Naive thymus-derived CD4-positive, alpha-beta T cell (primary cell): ENCODE measurements at regions of chr20 and their contacts with region 1.

Region 1: DNA sequence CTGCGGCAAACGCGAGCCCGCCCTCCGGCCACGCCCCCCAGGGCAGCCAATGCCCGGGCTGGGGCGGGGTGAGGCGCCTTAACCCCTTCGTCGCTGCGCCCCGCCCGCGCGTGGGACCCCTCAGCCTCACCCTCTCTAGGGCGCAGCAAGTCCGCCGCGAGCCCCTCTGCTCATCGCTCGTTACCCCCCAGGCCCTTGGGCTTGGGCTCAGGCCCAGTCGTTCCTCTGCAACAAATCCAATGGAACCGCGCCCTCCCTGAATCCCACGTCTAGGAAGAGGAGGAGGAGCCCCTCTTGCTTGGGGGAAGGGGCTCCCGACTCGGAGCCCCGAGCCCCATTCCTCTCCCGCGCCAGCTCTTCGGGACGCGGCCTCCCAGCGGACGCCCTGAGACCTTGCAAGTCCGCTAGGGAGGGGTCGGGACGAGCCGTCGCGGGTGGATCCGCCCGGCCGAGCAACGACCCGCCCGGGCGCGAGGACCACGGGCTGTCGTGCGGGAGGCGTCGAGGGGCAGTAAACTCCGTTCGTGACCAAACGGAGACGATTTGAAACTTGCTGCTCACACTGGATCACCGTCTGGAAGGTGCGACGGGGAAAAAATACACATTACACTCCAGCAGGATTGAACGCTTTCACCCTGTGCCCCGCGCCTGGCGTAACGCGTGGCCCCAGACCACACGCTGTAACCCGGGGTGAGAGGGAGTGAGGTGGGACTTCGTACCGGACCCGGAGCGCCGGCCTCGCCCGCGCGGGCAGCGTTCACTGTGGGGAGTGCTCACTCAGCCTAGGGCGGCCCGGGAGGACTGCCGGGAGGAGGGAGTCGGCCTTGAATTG is 477 bp upstream of the LZTS3 start:
- DNase-seq: peak in 7 of 9 donors; percentile 81 to 94 (median 92)
- ATAC-seq: peak; percentile 94
- H3K4me3 ChIP-seq: peak overlapping the region; percentile 87
- H3K4me3 Mint-ChIP-seq: peak overlapping the region; percentile 76 to 89 (median 86)
- H3K27ac ChIP-seq: peak overlapping the region; percentile 4
- H3K27ac Mint-ChIP-seq: peak overlapping the region; percentile 3 to 86 (median 51)
- H3K4me1 ChIP-seq: peaks cover 4 to 14% of the 10 kb centered on the region in 2 donors
- H3K4me1 Mint-ChIP-seq: peaks cover 15 to 34% (median 23%) of the 10 kb centered on the region in 7 donors
- H3K27me3 ChIP-seq: peaks cover 0 to 5% of the 10 kb centered on the region in 2 donors
- H3K27me3 Mint-ChIP-seq: peaks cover 0 to 63% (median 16%) of the 10 kb centered on the region in 5 donors

Region 2: GRCh38 chr20:2991532-2991931 is 182.3 kb before region 1 on chr20:
- CTCF ChIA-PET with region 1: no interaction called
- POLR2A ChIA-PET with region 1: no interaction called
- intact Hi-C with region 1: no loop called
- DNase-seq: no peak
- ATAC-seq: no peak
- H3K4me3 ChIP-seq: no peak overlapping the region
- H3K4me3 Mint-ChIP-seq: no peak overlapping the region
- H3K27ac ChIP-seq: no peak overlapping the region
- H3K27ac Mint-ChIP-seq: no peak overlapping the region
- H3K4me1 ChIP-seq: no peaks in the 10 kb centered on the region
- H3K4me1 Mint-ChIP-seq: peaks cover 0 to 36% (median 1%) of the 10 kb centered on the region in 7 donors
- H3K27me3 ChIP-seq: no peaks in the 10 kb centered on the region
- H3K27me3 Mint-ChIP-seq: no peaks in the 10 kb centered on the region

Region 3: GRCh38 chr20:3068986-3069900 is 104.6 kb before region 1 on chr20:
- CTCF ChIA-PET with region 1: interaction called, 3 read pairs
- POLR2A ChIA-PET with region 1: interaction called, 4 read pairs
- intact Hi-C with region 1: loop called (anchors 5 kb)
- DNase-seq: peak in 7 of 9 donors; percentile 52 to 73 (median 62)
- ATAC-seq: peak; percentile 61
- H3K4me3 ChIP-seq: no peak overlapping the region
- H3K4me3 Mint-ChIP-seq: peak overlapping the region in 1 of 10 donors; percentile 25
- H3K27ac ChIP-seq: no peak overlapping the region
- H3K27ac Mint-ChIP-seq: peak overlapping the region in 4 of 9 donors; percentile 32 to 77 (median 52)
- H3K4me1 ChIP-seq: peaks cover 0 to 17% of the 10 kb centered on the region in 2 donors
- H3K4me1 Mint-ChIP-seq: peaks cover 8 to 38% (median 27%) of the 10 kb centered on the region in 7 donors
- H3K27me3 ChIP-seq: no peaks in the 10 kb centered on the region
- H3K27me3 Mint-ChIP-seq: peaks cover 0 to 2% (median 0%) of the 10 kb centered on the region in 5 donors

Region 4: DNA sequence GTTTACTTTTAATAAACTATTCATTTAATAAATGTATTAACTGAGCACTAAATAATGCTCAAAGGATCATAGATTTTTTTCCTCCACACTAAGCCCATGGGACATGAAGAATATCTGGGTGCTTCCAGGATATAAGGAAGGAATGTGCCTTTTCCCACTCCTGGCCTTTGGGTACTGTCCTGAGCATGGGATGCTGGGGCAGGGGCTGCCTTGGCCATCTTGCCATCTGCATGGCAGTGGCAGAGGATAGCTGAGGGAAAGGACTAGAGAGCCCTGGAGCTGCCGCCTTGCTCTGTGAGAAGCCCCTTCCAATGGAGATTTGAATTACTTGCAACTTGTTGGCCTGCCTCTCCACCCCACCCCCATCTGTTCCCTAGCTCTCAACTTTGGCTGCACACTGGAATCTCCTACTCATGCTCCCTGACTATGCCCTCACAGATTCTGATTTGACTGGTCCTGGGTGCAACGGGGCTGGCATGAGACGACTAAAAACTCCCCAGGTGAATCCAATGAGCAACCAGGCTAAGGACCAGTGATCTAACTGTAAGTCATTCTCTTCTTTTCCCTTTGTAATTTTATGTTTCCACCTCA is 15.1 kb after region 1 on chr20:
- CTCF ChIA-PET with region 1: no interaction called
- POLR2A ChIA-PET with region 1: interaction called, 4 read pairs
- intact Hi-C with region 1: loop called in 1 of 2 experiments (anchors 1 kb)
- DNase-seq: no peak
- ATAC-seq: no peak
- H3K4me3 ChIP-seq: no peak overlapping the region
- H3K4me3 Mint-ChIP-seq: no peak overlapping the region
- H3K27ac ChIP-seq: no peak overlapping the region
- H3K27ac Mint-ChIP-seq: peak overlapping the region in 2 of 9 donors; percentile 42 to 82
- H3K4me1 ChIP-seq: no peaks in the 10 kb centered on the region
- H3K4me1 Mint-ChIP-seq: peaks cover 0 to 4% (median 0%) of the 10 kb centered on the region in 7 donors
- H3K27me3 ChIP-seq: no peaks in the 10 kb centered on the region
- H3K27me3 Mint-ChIP-seq: no peaks in the 10 kb centered on the region

Region 5: GRCh38 chr20:3204124-3204822 is 30.4 kb after region 1 on chr20 and contains the start of gene DDRGK1:
- CTCF ChIA-PET with region 1: interaction called, 7 read pairs
- POLR2A ChIA-PET with region 1: interaction called, 5 read pairs
- intact Hi-C with region 1: loop called (anchors 1 kb)
- DNase-seq: peak; percentile 79 to 95 (median 90)
- ATAC-seq: peak; percentile 96
- H3K4me3 ChIP-seq: peak within 1 kb of the TSS; percentile 99
- H3K4me3 Mint-ChIP-seq: peak within 1 kb of the TSS; percentile 91 to 97 (median 95)
- H3K27ac ChIP-seq: peak within 1 kb of the TSS; percentile 91
- H3K27ac Mint-ChIP-seq: peak within 1 kb of the TSS; percentile 91 to 98 (median 96)
- H3K4me1 ChIP-seq: peaks cover 12 to 18% of the 10 kb centered on the region in 2 donors
- H3K4me1 Mint-ChIP-seq: peaks cover 21 to 26% (median 22%) of the 10 kb centered on the region in 7 donors
- H3K27me3 ChIP-seq: no peaks in the 10 kb centered on the region
- H3K27me3 Mint-ChIP-seq: no peaks in the 10 kb centered on the region
- total RNA-seq, gene DDRGK1: 39.4 to 60.3 (median 46.6) TPM

Region 6: DNA sequence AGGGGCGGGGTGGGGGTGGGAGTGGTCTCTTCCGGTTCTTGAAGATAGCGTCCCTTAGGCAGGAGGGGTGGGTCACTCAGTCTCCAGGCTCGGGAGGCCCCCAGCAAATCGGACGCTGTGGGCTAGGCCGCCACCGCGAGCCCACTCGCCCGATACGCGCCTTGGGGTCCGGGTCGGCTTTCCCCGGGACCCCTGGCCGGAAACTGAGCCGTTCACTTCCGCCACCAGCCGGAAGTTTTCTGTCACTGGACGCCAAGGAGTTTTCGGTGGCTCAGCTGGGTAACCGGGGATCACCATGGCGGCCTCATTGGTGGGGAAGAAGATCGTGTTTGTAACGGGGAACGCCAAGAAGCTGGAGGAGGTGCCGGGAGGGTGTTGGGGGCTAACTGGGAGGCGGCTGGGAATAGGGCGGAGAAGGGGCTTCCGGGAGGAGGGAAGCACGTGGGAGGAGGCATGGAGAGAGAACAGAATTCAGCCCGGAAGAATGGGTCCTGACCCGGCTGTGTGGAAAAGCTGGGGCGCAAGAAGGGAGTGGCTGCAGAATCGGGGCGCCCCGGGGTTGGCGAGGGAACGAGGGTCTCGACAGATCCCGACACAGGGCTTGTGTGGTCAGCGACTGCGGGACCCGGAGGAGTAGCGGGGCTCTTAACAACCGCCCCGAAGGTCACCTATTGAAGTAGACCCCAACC is 35.6 kb after region 1 on chr20 and contains the start of gene ITPA:
- CTCF ChIA-PET with region 1: no interaction called
- POLR2A ChIA-PET with region 1: interaction called, 5 read pairs
- intact Hi-C with region 1: loop called (anchors 1 kb)
- DNase-seq: peak; percentile 26 to 67 (median 42)
- ATAC-seq: peak; percentile 44
- H3K4me3 ChIP-seq: peak within 1 kb of the TSS; percentile 94
- H3K4me3 Mint-ChIP-seq: peak within 1 kb of the TSS; percentile 85 to 100 (median 96)
- H3K27ac ChIP-seq: peak within 1 kb of the TSS; percentile 85
- H3K27ac Mint-ChIP-seq: peak within 1 kb of the TSS; percentile 85 to 99 (median 94)
- H3K4me1 ChIP-seq: peaks cover 8 to 14% of the 10 kb centered on the region in 2 donors
- H3K4me1 Mint-ChIP-seq: peaks cover 20 to 38% (median 31%) of the 10 kb centered on the region in 7 donors
- H3K27me3 ChIP-seq: no peaks in the 10 kb centered on the region
- H3K27me3 Mint-ChIP-seq: no peaks in the 10 kb centered on the region
- total RNA-seq, gene ITPA: 37.7 to 71.2 (median 43.5) TPM

Region 7: GRCh38 chr20:3251806-3252205 is 78.0 kb after region 1 on chr20:
- CTCF ChIA-PET with region 1: no interaction called
- POLR2A ChIA-PET with region 1: no interaction called
- intact Hi-C with region 1: no loop called
- DNase-seq: no peak
- ATAC-seq: no peak
- H3K4me3 ChIP-seq: no peak overlapping the region
- H3K4me3 Mint-ChIP-seq: no peak overlapping the region
- H3K27ac ChIP-seq: no peak overlapping the region
- H3K27ac Mint-ChIP-seq: no peak overlapping the region
- H3K4me1 ChIP-seq: peaks cover 0 to 7% of the 10 kb centered on the region in 2 donors
- H3K4me1 Mint-ChIP-seq: peaks cover 0 to 3% (median 0%) of the 10 kb centered on the region in 7 donors
- H3K27me3 ChIP-seq: peaks cover 0 to 6% of the 10 kb centered on the region in 2 donors
- H3K27me3 Mint-ChIP-seq: peaks cover 16 to 27% (median 23%) of the 10 kb centered on the region in 5 donors